Gastrocnemius medialis (tissue), 4 donors: ENCODE measurements at regions of chr20 and their contacts with region 1.

Region 1: GRCh38 chr20:36605399-36606157 is at the start of gene RAB5IF:
- DNase-seq: peak; percentile 97 to 99
- ATAC-seq: peak; percentile 91 to 93
- H3K4me3 ChIP-seq: peak within 1 kb of the TSS; percentile 75 to 97 (median 90)
- H3K27ac ChIP-seq: peak within 1 kb of the TSS; percentile 79 to 98 (median 90)
- H3K4me1 ChIP-seq: peaks cover 21 to 25% of the 10 kb centered on the region in 2 donors
- H3K27me3 ChIP-seq: no peaks in the 10 kb centered on the region
- CTCF ChIP-seq: peak; percentile 81 to 97 (median 91)
- POLR2A ChIP-seq: peak; percentile 88 to 89
- total RNA-seq, gene RAB5IF: 215 to 768 (median 545) TPM

Region 2: DNA sequence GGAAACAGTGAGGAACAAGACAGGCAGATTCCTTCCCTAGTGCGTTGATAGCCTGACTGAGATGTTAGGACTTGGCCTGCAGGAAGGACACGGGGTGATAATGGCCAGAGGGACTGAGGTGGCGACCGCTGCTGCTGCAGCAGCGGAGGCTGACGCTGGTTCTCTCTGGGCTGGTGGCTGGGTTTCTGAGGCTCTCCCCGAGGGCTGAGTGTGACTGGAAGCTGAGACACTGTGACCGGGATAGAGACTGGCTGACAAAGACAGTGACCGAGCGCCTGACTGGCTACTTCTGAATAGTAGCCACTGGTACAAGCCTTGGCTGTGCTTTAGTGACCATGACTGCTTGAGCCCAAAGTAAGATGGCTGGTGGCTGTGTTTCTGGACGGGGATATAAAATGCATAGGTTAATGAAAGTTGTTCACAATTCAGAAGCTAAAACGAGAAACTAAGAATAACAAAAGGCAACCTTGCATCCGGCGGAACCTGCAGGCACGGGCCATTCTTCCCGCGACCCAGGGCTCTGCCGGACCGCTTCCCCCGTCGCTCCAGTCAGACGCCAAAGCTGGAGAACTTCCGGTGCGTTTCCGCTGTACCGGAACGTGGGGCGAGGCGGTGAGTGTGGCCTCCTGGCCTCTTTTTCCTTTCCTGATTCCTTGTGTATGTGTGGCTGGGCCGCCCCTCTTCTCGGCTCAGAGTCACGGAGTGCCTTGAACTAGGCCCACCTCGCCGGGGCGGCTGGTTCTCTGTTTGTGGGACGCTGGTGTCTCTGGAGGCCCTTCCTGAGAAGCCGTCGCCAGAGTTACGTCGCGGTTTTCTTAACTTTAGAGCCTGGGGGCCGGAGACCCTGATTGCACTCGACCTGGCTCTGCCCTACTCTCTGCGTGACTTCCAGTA is 369.4 kb before region 1 on chr20 and contains the start of gene AAR2:
- in situ Hi-C with region 1: no loop called
- intact Hi-C with region 1: loop called (anchors 1 kb)
- DNase-seq: peak; percentile 58 to 67
- ATAC-seq: peak; percentile 95 to 96
- H3K4me3 ChIP-seq: peak within 1 kb of the TSS; percentile 73 to 90 (median 79)
- H3K27ac ChIP-seq: peak within 1 kb of the TSS; percentile 75 to 90 (median 84)
- H3K4me1 ChIP-seq: peaks cover 17 to 22% of the 10 kb centered on the region in 2 donors
- H3K27me3 ChIP-seq: no peaks in the 10 kb centered on the region
- CTCF ChIP-seq: no peak
- POLR2A ChIP-seq: peak in 1 of 2 donors; percentile 62
- total RNA-seq, gene AAR2: 18.7 to 24.4 (median 21.2) TPM

Region 3: GRCh38 chr20:36550797-36551299 is 54.7 kb before region 1 on chr20:
- in situ Hi-C with region 1: loop called in 1 of 4 experiments (anchors 10 kb)
- intact Hi-C with region 1: loop called (anchors 2 kb)
- DNase-seq: no peak
- ATAC-seq: no peak
- H3K4me3 ChIP-seq: no peak overlapping the region
- H3K27ac ChIP-seq: peak overlapping the region; percentile 29 to 54 (median 48)
- H3K4me1 ChIP-seq: no peaks in the 10 kb centered on the region
- H3K27me3 ChIP-seq: no peaks in the 10 kb centered on the region
- CTCF ChIP-seq: no peak
- POLR2A ChIP-seq: no peak

Region 4: DNA sequence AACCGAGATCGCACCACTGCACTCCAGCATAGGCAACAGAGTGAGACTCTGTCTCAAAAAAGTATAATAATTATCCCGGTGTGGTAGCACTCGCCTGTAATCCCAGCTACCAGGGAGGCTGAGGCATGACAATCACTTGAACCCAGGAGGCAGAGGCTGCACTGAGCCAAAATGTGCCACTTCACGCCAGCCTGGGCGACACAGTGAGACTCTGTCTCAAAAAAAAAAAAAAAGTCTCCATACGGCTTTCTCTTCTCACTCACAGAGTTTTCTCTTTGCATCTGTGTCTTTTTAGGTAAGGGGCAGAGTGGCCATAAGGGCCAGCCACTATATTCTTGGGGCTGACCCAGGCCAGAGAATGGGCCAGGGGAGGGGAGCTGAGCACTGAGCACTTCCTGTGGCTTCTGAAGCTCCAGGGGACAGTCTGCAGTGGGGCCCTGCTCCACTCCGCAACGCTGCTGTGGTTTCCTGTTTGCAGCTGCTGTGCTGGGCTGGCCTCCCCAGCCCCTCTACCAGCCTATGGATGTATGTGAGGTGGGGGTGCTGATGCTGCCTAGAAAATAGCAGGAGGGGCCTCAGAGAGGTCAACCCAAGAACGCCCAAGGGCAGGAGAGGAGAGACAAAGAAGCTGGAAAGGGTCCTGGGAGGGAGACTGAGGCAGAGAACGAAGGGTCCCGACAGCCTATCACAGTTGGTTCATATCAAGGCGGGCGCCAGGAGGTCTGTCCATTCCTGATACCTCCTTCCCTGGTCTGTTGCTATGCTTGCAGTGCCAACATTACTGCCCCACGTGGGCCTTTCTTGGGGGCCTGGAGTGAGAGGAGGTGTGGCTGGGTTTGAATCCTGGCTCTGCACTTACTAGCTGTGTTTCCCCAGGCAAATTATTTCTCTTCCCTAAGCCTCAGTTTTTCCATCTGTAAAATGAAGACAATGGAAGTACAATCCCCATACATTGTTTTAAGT is 24.4 kb after region 1 on chr20:
- in situ Hi-C with region 1: no loop called
- intact Hi-C with region 1: no loop called
- DNase-seq: no peak
- ATAC-seq: no peak
- H3K4me3 ChIP-seq: no peak overlapping the region
- H3K27ac ChIP-seq: no peak overlapping the region
- H3K4me1 ChIP-seq: no peaks in the 10 kb centered on the region
- H3K27me3 ChIP-seq: no peaks in the 10 kb centered on the region
- CTCF ChIP-seq: no peak
- POLR2A ChIP-seq: no peak

Region 5: DNA sequence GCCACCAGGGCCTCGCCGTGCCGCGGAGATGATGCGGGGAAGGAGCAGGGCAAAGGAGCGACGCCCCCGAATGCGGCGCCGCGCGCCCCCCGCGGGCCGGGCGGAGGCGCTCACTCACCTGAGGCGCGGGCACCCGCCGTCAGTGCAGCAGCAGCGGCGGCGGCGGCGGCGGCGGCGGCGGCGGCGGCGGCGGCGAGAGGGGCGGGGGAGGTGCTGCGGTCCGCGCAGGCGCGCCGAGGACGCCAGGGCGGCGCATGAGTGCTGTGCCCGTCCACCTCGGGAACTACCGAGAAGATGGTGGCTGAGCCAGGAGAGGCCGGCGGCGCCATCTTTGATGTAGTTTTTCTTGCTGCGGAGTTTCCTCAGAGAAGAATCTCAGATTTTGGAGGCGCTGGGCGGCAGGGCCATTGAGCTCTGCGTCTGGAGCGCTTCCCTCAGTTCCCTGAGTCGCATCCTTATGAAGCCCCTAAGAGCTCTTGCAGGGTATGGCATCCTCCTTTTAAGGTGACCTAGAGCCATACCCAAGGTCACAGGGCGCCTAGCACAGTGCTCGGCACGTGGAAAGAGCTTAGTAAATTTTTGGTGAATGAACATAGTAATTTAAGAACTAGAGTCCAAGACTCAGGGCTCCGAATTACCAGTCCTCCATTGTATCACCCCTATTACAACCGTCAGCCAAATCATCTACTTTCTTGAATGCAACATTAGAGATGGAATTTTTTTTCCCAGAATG is 140.5 kb after region 1 on chr20 and contains the start of gene NDRG3:
- in situ Hi-C with region 1: loop called in 1 of 4 experiments (anchors 10 kb)
- intact Hi-C with region 1: loop called (anchors 5 kb)
- DNase-seq: peak; percentile 92 to 95
- ATAC-seq: peak; percentile 80 to 90
- H3K4me3 ChIP-seq: peak within 1 kb of the TSS; percentile 79 to 94 (median 88)
- H3K27ac ChIP-seq: peak within 1 kb of the TSS; percentile 88 to 95 (median 92)
- H3K4me1 ChIP-seq: peaks cover 18 to 32% of the 10 kb centered on the region in 2 donors
- H3K27me3 ChIP-seq: no peaks in the 10 kb centered on the region
- CTCF ChIP-seq: peak in 2 of 5 experiments; percentile 5 to 8
- POLR2A ChIP-seq: peak; percentile 29 to 68
- total RNA-seq, gene NDRG3: 6.7 to 24.9 (median 13.2) TPM